ENCODE measurements at regions of chr6 and their contacts with region 1.

Region 1: DNA sequence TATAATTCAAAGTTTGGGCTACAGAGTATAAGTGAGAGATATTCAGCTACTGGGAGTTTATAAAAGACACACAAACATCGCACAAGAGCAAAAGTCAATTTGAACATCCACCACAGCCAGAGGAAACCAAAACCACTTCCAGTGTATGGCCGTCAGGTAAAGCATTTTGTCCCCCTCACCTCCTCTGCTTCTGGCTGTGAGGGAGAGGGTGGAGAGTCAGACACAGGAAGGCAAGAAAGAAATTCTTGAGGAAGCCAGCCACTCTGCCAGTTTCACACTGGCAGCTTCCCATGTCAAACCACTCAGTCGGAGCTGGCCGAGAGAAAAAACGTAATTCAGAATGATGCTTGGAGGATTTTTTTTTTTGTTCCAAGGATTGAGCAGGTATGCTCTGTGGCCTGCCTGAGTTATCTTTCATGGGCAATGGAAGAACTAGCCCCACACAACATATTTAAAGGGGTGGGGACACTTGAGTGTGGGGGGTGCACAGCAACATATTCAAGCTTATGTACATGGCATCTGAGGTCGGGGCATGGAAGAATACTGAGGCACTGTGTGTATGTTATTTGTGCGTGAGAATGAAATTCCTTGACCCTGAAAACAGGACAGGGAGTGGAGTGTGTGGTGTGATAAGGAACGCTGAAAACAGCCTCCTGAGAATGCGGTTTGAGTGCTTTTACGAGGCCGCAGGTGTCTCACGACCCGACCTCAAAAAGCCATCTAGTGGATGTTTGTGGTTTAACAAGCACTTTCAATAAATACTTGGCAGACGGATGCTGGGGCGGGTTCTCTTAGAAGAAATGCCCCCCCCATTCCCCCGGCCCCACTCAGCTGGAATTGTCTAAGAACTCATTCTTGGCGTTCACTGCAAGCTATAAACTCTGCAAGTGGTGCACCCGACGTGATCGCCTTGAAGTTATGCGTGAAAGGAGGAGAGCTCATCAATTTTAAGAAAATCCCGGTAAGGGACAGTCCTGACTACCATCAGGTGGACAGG is 27.5 kb upstream of the ZBTB22 start:
- DNase-seq: peak; percentile 76
- H3K4me3 ChIP-seq: no peak overlapping the region
- H3K27ac ChIP-seq: no peak overlapping the region
- H3K4me1 ChIP-seq: peaks cover 10% of the 10 kb centered on the region
- H3K27me3 ChIP-seq: no peaks in the 10 kb centered on the region
- CTCF ChIP-seq: peak; percentile 33 to 65

Region 2: GRCh38 chr6:33279971-33280511 is 65.0 kb before region 1 on chr6:
- CTCF ChIA-PET with region 1: no interaction called
- dilution Hi-C with region 1: no loop called
- in situ Hi-C with region 1: no loop called
- intact Hi-C with region 1: loop called (anchors 1 kb)
- DNase-seq: peak; percentile 64
- H3K4me3 ChIP-seq: no peak overlapping the region
- H3K27ac ChIP-seq: no peak overlapping the region
- H3K4me1 ChIP-seq: peaks cover 18% of the 10 kb centered on the region
- H3K27me3 ChIP-seq: no peaks in the 10 kb centered on the region
- CTCF ChIP-seq: peak; percentile 78

Region 3: GRCh38 chr6:33323623-33323948 is 21.4 kb before region 1 on chr6:
- CTCF ChIA-PET with region 1: no interaction called
- dilution Hi-C with region 1: no loop called
- in situ Hi-C with region 1: no loop called
- intact Hi-C with region 1: loop called (anchors 1 kb)
- DNase-seq: no peak
- H3K4me3 ChIP-seq: peak overlapping the region; percentile 43 to 80 (median 65)
- H3K27ac ChIP-seq: peak overlapping the region; percentile 23
- H3K4me1 ChIP-seq: peaks cover 38% of the 10 kb centered on the region
- H3K27me3 ChIP-seq: no peaks in the 10 kb centered on the region
- CTCF ChIP-seq: no peak

Measured in mammary epithelial cell (primary cell).